Astrocyte of the cerebellum (primary cell): ENCODE measurements at regions of chr18 and their contacts with region 1.

Region 1: DNA sequence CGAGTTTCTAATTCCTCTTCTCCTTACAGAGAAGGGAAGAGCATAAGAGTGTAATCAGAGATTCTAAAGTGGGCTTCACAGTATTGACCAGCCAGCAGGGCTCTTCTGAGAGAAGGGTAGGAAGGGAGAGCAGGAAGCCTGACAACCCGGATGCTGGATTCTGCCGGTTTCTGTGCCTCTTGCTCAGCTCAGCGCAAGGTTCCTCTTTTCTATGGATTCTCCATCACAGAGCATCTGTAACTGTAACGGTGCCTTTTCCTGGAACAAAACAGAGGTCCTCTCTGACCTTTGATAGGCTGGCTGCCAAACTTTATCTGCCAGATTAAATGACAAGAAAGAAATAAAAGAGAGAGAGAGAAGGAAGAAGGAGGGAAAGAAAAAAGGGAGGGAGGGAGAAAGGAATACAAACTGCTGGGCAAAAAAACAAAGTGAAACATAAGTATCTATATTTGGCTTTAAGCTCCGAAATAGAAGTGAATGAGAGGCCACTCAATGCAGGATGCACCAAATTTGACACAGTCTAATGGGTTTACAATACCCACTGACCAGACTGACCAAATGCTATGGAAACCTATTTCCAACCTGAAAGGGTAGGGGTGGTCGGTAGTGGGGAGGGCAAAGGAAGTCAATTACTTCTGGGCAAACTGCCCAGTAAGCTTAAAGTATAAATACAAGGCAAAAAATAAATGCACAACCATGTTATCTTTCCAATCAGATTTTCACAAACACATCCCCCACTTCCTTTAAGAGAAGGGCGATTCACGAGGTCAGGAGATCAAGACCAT is 59.2 kb downstream of the PIEZO2 start:
- DNase-seq: no peak
- H3K4me3 ChIP-seq: no peak overlapping the region
- CTCF ChIP-seq: no peak

Region 2: GRCh38 chr18:11052800-11053199 is 37.3 kb before region 1 on chr18:
- in situ Hi-C with region 1: loop called (anchors 5 kb)
- DNase-seq: no peak
- H3K4me3 ChIP-seq: no peak overlapping the region
- CTCF ChIP-seq: no peak